Activated CD8-positive, alpha-beta T cell treated with anti-CD3 and anti-CD28 coated beads for 36 hours (primary cell): ENCODE measurements at regions of chr2 and their contacts with region 1.

Region 1: GRCh38 chr2:240143801-240144648 is 3.6 kb upstream of the OTOS start:
- DNase-seq: peak; percentile 83
- ATAC-seq: peak; percentile 97
- H3K4me3 Mint-ChIP-seq: no peak overlapping the region
- H3K27ac Mint-ChIP-seq: no peak overlapping the region
- H3K4me1 Mint-ChIP-seq: no peaks in the 10 kb centered on the region
- H3K27me3 Mint-ChIP-seq: peaks cover 4% of the 10 kb centered on the region
- CTCF ChIP-seq: peak; percentile 87

Region 2: GRCh38 chr2:240069853-240070252 is 74.2 kb before region 1 on chr2:
- CTCF ChIA-PET with region 1: interaction called, 28 read pairs
- POLR2A ChIA-PET with region 1: no interaction called
- intact Hi-C with region 1: no loop called
- DNase-seq: no peak
- ATAC-seq: no peak
- H3K4me3 Mint-ChIP-seq: no peak overlapping the region
- H3K27ac Mint-ChIP-seq: no peak overlapping the region
- H3K4me1 Mint-ChIP-seq: no peaks in the 10 kb centered on the region
- H3K27me3 Mint-ChIP-seq: peaks cover 15% of the 10 kb centered on the region
- CTCF ChIP-seq: no peak

Region 3: GRCh38 chr2:240310645-240311044 is 166.6 kb after region 1 on chr2:
- CTCF ChIA-PET with region 1: no interaction called
- POLR2A ChIA-PET with region 1: no interaction called
- intact Hi-C with region 1: no loop called
- DNase-seq: no peak
- ATAC-seq: no peak
- H3K4me3 Mint-ChIP-seq: no peak overlapping the region
- H3K27ac Mint-ChIP-seq: no peak overlapping the region
- H3K4me1 Mint-ChIP-seq: no peaks in the 10 kb centered on the region
- H3K27me3 Mint-ChIP-seq: peaks cover 5% of the 10 kb centered on the region
- CTCF ChIP-seq: no peak